ENCODE measurements at regions of chrX and their contacts with region 1.

Region 1: DNA sequence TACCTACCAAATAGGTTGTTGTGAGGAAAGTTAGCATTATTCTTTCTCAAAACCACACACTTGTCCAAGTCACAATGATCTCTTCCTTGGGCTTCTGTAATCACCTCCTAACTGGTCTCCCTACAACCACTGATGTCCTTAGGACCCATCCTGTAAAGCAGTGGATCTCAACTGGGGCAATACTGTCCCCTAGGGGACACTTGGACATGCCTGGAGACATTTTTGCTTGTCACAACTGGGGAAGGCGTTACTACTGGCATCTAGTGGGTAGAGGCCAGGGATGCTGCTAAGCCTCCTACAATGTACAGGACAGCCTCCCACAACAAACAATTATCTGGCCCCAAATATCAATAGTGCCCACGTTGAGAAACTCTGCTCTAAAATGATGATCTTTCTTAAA is 118.7 kb upstream of the AP1S2 start:
- DNase-seq: peak; percentile 16
- ATAC-seq: peak; percentile 74
- H3K4me3 ChIP-seq: no peak overlapping the region
- H3K27ac ChIP-seq: no peak overlapping the region
- H3K4me1 ChIP-seq: no peaks in the 10 kb centered on the region
- H3K27me3 ChIP-seq: no peaks in the 10 kb centered on the region
- CTCF ChIP-seq: peak; percentile 69
- EP300 ChIP-seq: no peak
- POLR2A ChIP-seq: no peak
- RAD21 ChIP-seq: no peak

Region 2: GRCh38 chrX:15686818-15687685 is 286.2 kb before region 1 on chrX:
- CTCF ChIA-PET with region 1: no interaction called
- POLR2A ChIA-PET with region 1: no interaction called
- in situ Hi-C with region 1: no loop called
- intact Hi-C with region 1: loop called (anchors 5 kb)
- DNase-seq: peak; percentile 46
- ATAC-seq: peak; percentile 80
- H3K4me3 ChIP-seq: no peak overlapping the region
- H3K27ac ChIP-seq: no peak overlapping the region
- H3K4me1 ChIP-seq: no peaks in the 10 kb centered on the region
- H3K27me3 ChIP-seq: no peaks in the 10 kb centered on the region
- CTCF ChIP-seq: peak; percentile 72
- EP300 ChIP-seq: no peak
- POLR2A ChIP-seq: no peak
- RAD21 ChIP-seq: 0 out of 2 replicates have a peak, but pooled peaks have one; percentile 23

Region 3: DNA sequence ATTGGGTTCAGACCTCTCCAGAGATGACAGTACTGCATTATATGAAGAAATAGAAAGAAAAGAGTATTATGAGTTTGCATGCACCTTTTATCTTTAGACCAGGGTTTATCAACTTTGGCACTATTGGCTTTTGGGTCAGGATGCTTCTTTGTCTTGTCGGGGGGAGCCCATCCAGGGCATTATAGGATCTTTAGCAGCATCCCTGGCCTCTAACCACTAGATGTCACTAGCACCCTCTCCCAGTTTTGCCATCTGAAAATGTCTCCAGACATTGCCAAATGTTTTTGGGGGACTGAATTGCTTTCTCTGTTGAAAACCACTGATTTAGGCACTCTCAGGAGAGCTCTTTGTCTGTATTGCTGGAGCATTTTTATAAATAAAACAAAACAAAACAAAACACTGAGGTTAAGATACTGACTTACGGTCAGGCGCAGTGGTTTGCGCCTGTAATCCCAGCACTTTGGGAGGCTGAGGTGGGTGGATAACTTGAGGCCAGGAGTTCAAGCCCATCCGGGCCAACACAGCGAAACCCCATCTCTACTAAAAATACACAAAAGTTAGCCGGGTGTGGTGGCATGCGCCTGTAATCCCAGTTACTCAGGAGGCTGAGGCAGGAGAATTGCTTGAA is 211.6 kb before region 1 on chrX:
- CTCF ChIA-PET with region 1: no interaction called
- POLR2A ChIA-PET with region 1: no interaction called
- in situ Hi-C with region 1: no loop called
- intact Hi-C with region 1: loop called (anchors 10 kb)
- DNase-seq: no peak
- ATAC-seq: peak; percentile 44; the same call in 1 of the 3 replicates
- H3K4me3 ChIP-seq: no peak overlapping the region
- H3K27ac ChIP-seq: no peak overlapping the region
- H3K4me1 ChIP-seq: no peaks in the 10 kb centered on the region
- H3K27me3 ChIP-seq: no peaks in the 10 kb centered on the region
- CTCF ChIP-seq: peak; percentile 49
- EP300 ChIP-seq: no peak
- POLR2A ChIP-seq: no peak
- RAD21 ChIP-seq: no peak

Region 4: DNA sequence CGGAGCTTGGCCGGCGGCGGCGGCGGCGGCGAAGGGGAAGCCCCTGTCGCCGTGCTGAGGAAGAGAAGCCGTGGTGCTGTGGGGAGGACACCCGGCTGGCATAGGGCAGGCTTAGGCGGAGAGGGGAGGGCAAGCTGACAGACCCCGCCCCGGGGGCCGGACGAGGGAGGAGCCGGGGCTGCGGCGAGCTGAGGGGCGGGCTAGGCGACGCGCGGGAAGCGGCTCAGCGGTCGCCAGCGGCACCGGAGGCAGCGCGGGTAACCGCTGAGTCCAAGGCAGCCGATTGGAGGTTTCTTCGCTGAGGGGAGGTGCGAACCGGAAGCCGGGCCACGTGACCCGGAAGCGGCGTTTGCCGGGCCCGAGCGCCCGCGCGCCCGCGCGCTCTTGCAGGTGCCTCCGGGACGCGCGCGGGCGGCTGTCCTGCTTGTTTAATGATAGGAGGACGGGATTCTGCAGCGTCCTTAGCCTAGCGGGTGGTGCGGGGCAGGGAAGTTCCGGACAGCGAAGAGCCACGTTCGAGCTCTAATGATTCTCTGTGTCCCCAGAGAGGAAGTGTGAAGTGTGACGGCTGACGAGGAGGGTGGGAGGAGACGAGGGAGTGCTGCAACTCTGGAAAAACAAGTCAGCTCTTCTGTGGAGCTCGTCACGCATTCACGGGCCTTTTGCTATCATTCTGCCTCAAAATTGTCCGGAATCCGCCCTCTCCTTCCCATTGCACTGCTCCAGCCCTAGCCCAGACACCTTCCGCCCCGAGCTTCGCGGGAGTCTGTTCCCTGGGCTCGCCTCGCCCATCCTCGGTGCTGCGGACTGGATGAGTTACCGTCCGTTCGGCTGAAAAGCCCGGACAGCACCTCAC is 118.4 kb before region 1 on chrX and contains the start of gene AP1S2:
- CTCF ChIA-PET with region 1: no interaction called
- POLR2A ChIA-PET with region 1: no interaction called
- in situ Hi-C with region 1: no loop called
- intact Hi-C with region 1: loop called (anchors 10 kb)
- DNase-seq: peak; percentile 80
- ATAC-seq: peak; percentile 97
- H3K4me3 ChIP-seq: peak within 1 kb of the TSS; percentile 67 to 74 (median 72)
- H3K27ac ChIP-seq: peak within 1 kb of the TSS; percentile 64
- H3K4me1 ChIP-seq: peaks cover 22% of the 10 kb centered on the region; the same call in 1 of the 2 replicates
- H3K27me3 ChIP-seq: peaks cover 0 to 3% of the 10 kb centered on the region in 2 experiments; a peak in 1 of 5 replicates
- CTCF ChIP-seq: no peak
- EP300 ChIP-seq: no peak
- POLR2A ChIP-seq: no peak; a peak in 1 of 4 replicates
- RAD21 ChIP-seq: no peak
- total RNA-seq, gene AP1S2: 18.8 and 22.7 TPM in 2 replicates

Region 5: GRCh38 chrX:15947648-15948317 is 25.5 kb before region 1 on chrX:
- CTCF ChIA-PET with region 1: no interaction called
- POLR2A ChIA-PET with region 1: no interaction called
- in situ Hi-C with region 1: no loop called
- intact Hi-C with region 1: no loop called
- DNase-seq: no peak
- ATAC-seq: no peak
- H3K4me3 ChIP-seq: no peak overlapping the region
- H3K27ac ChIP-seq: no peak overlapping the region
- H3K4me1 ChIP-seq: no peaks in the 10 kb centered on the region
- H3K27me3 ChIP-seq: no peaks in the 10 kb centered on the region
- CTCF ChIP-seq: no peak
- EP300 ChIP-seq: no peak
- POLR2A ChIP-seq: no peak
- RAD21 ChIP-seq: no peak

Region 6: DNA sequence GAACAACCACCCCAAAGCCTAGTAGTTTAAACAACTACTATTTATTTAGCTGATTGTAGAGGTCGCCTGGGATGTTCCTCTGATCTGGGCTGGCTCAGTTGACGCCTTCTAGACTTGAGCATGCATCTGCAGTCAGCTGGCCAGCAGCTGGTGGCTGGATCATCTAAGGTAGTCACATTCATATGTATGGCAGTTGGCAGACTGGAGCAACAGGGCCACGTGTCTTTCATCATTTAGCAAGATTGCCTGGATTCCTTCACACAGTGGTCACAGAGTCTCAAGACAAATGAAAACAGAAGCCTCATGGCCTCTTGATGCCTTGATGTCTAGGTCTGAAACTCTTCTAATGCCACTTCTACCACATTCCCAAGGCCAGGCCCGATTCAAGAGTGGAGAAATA is 456.1 kb after region 1 on chrX:
- CTCF ChIA-PET with region 1: no interaction called
- POLR2A ChIA-PET with region 1: no interaction called
- in situ Hi-C with region 1: no loop called
- intact Hi-C with region 1: no loop called
- DNase-seq: no peak
- ATAC-seq: no peak
- H3K4me3 ChIP-seq: no peak overlapping the region
- H3K27ac ChIP-seq: no peak overlapping the region
- H3K4me1 ChIP-seq: no peaks in the 10 kb centered on the region
- H3K27me3 ChIP-seq: no peaks in the 10 kb centered on the region
- CTCF ChIP-seq: no peak
- EP300 ChIP-seq: no peak
- POLR2A ChIP-seq: no peak
- RAD21 ChIP-seq: no peak

Region 7: GRCh38 chrX:16479206-16479869 is 506.0 kb after region 1 on chrX:
- CTCF ChIA-PET with region 1: no interaction called
- POLR2A ChIA-PET with region 1: no interaction called
- in situ Hi-C with region 1: no loop called
- intact Hi-C with region 1: no loop called
- DNase-seq: peak; percentile 20
- ATAC-seq: peak; percentile 35; the same call in 1 of the 3 replicates
- H3K4me3 ChIP-seq: no peak overlapping the region
- H3K27ac ChIP-seq: no peak overlapping the region
- H3K4me1 ChIP-seq: peaks cover 29% of the 10 kb centered on the region
- H3K27me3 ChIP-seq: no peaks in the 10 kb centered on the region
- CTCF ChIP-seq: no peak
- EP300 ChIP-seq: 0 out of 4 replicates have a peak, but pooled peaks of 1 of the 2 experiments have one; percentile 29
- POLR2A ChIP-seq: no peak
- RAD21 ChIP-seq: no peak

Measured in HepG2 (cell line).